Aorta (tissue), 5 donors: ENCODE measurements at regions of chr5 and their contacts with region 1.

Region 1: GRCh38 chr5:151164686-151165392 is 7.3 kb upstream of the ANXA6 start:
- DNase-seq: peak; percentile 72 to 85
- ATAC-seq: peak; percentile 87
- H3K4me3 ChIP-seq: no peak overlapping the region
- H3K27ac ChIP-seq: no peak overlapping the region
- H3K4me1 ChIP-seq: no peaks in the 10 kb centered on the region
- H3K27me3 ChIP-seq: no peaks in the 10 kb centered on the region

Region 2: GRCh38 chr5:149724130-149724840 is 1440.6 kb before region 1 on chr5:
- intact Hi-C with region 1: no loop called
- DNase-seq: no peak
- ATAC-seq: no peak
- H3K4me3 ChIP-seq: no peak overlapping the region
- H3K27ac ChIP-seq: no peak overlapping the region
- H3K4me1 ChIP-seq: no peaks in the 10 kb centered on the region
- H3K27me3 ChIP-seq: no peaks in the 10 kb centered on the region

Region 3: DNA sequence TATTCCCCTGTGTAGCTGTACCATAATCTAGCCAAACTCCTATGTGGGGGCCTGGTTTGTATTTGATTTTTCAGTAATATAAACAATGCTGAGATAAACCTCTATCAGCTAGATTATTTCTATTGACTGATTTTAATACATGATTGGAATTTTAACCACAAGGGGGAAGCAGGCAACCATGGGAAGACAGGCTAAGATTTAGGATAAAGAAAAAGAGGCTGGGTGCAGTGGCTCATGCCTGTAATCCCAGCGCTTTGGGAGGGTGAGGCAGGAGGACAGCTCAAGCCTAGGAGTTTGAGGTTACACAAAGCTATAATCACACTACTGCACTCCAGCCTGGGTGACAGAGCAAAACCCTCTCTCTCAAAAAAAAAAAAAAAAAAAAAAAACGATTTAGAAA is 162.6 kb before region 1 on chr5:
- intact Hi-C with region 1: loop called in 1 of 2 experiments (anchors 5 kb)
- DNase-seq: no peak
- ATAC-seq: no peak
- H3K4me3 ChIP-seq: no peak overlapping the region
- H3K27ac ChIP-seq: no peak overlapping the region
- H3K4me1 ChIP-seq: peaks cover 0 to 3% of the 10 kb centered on the region in 2 donors
- H3K27me3 ChIP-seq: no peaks in the 10 kb centered on the region

Region 4: DNA sequence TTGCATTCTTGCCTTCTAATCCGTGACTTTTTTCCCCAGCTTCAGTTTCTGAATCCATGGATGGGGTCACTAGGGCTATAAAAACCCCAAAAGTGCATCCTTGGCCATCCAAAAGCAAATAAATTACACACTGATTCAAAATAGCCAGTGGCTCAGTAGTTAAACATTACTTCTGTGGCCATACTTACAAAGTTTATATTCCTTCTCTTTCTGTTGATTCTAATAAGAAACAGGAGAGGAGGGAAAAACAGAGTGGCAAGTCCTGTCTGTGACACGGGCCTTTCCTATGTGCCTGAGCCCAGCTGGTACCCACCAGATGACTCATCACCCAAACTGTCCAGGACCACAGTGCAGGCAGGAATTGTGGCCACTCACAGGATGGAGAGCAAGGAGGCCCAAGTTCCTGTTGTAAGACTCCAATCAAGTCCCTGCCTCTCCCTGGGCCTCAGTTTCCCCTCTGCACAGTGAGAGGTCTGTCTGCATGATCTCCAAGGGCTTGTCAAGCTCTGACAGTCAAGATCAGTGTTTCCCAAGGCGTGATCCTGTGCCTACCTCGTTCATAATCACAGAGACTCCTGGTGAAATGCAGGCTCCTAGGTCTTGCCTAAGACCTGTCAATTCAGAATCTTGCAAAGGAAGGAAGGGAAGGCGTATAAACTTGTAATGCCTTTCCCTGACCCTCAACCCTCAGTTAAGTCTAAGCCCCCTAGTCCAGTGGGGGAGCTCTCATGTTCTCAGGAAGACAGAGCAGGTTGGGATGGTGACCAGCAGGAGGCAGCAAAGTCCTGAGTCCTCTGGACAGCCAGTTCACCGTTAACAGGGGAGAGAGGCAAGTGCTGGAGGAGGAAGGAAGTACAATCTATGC is 113.5 kb before region 1 on chr5:
- intact Hi-C with region 1: loop called (anchors 1 to 5 kb)
- DNase-seq: peak; percentile 89 to 93
- ATAC-seq: peak; percentile 86
- H3K4me3 ChIP-seq: no peak overlapping the region
- H3K27ac ChIP-seq: no peak overlapping the region
- H3K4me1 ChIP-seq: no peaks in the 10 kb centered on the region
- H3K27me3 ChIP-seq: no peaks in the 10 kb centered on the region

Region 5: DNA sequence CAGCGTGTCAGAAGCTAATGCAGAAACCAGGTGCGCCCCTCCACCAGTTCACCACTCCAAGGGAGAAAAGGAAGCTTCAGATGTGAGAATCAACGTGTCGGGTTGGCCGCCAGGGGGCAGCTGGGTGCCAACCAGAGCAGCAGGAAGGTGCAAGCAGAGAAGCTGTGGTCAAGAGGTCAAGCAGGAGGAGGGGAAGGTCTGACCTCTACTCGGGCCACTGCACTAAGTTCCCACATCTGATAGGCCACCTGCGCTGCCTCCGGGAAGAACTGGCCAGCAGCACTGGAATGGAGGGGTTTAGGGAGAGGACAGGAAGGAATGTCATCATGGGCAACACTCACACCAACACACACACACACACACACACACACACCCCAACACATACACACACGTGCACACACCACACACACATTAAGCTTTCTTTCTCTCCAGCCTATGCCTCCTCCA is 38.6 kb before region 1 on chr5:
- intact Hi-C with region 1: loop called (anchors 2 kb)
- DNase-seq: peak; percentile 87 to 89
- ATAC-seq: peak; percentile 67
- H3K4me3 ChIP-seq: no peak overlapping the region
- H3K27ac ChIP-seq: peak overlapping the region in 1 of 2 donors; percentile 16
- H3K4me1 ChIP-seq: no peaks in the 10 kb centered on the region
- H3K27me3 ChIP-seq: no peaks in the 10 kb centered on the region

Region 6: DNA sequence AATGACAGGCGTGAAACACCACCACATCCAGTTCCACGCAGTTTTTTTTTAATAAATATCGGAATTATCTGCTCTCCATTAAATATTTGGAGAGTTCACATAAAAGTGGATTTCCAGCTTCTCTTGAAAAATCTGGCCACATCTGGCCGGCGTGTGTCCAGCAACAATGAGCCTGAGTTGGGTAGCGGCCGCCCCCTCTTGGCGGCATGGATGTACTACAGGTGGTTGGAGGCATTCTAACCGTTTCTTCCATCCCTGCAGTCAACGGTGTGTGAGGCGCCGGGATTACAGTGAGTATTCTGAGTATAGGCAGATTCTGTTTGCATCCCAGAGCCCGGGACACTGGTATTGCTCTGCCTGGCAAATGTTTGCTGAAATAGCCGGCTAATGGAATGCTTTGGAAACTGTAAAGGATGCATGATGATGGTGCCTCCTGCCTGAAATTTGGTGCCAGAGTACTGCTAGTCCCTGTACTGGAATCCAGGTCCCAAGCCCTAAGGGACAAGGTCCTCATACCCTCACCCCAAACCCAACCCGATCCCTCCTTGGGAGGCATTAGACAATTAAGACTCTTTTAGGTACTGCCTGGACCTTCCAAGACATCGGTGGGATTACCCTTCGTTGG is 74.5 kb after region 1 on chr5:
- intact Hi-C with region 1: loop called in 1 of 2 experiments (anchors 10 kb)
- DNase-seq: peak; percentile 86 to 94
- ATAC-seq: peak; percentile 83
- H3K4me3 ChIP-seq: no peak overlapping the region
- H3K27ac ChIP-seq: no peak overlapping the region
- H3K4me1 ChIP-seq: no peaks in the 10 kb centered on the region
- H3K27me3 ChIP-seq: no peaks in the 10 kb centered on the region